ENCODE measurements at regions of chr11 and their contacts with region 1.

Region 1: GRCh38 chr11:66268283-66268951 is at the start of gene RAB1B:
- DNase-seq: peak; percentile 98 to 100
- H3K4me3 ChIP-seq: peak within 1 kb of the TSS; percentile 63 to 84
- H3K27ac ChIP-seq: peak within 1 kb of the TSS; percentile 94 to 99
- H3K4me1 ChIP-seq: peaks cover 0 to 24% of the 10 kb centered on the region in 2 donors
- H3K27me3 ChIP-seq: no peaks in the 10 kb centered on the region
- CTCF ChIP-seq: no peak
- total RNA-seq, gene RAB1B: 171 TPM

Region 2: GRCh38 chr11:65637794-65638317 is 630.6 kb before region 1 on chr11 and contains the start of gene SIPA1:
- intact Hi-C with region 1: no loop called
- DNase-seq: peak in 1 of 2 donors; percentile 84
- H3K4me3 ChIP-seq: peak within 1 kb of the TSS; percentile 53 to 84
- H3K27ac ChIP-seq: peak within 1 kb of the TSS; percentile 71 to 84
- H3K4me1 ChIP-seq: peaks cover 2 to 10% of the 10 kb centered on the region in 2 donors
- H3K27me3 ChIP-seq: no peaks in the 10 kb centered on the region
- CTCF ChIP-seq: peak in 2 of 3 experiments; percentile 6 to 34
- total RNA-seq, gene SIPA1: 145 TPM

Region 3: DNA sequence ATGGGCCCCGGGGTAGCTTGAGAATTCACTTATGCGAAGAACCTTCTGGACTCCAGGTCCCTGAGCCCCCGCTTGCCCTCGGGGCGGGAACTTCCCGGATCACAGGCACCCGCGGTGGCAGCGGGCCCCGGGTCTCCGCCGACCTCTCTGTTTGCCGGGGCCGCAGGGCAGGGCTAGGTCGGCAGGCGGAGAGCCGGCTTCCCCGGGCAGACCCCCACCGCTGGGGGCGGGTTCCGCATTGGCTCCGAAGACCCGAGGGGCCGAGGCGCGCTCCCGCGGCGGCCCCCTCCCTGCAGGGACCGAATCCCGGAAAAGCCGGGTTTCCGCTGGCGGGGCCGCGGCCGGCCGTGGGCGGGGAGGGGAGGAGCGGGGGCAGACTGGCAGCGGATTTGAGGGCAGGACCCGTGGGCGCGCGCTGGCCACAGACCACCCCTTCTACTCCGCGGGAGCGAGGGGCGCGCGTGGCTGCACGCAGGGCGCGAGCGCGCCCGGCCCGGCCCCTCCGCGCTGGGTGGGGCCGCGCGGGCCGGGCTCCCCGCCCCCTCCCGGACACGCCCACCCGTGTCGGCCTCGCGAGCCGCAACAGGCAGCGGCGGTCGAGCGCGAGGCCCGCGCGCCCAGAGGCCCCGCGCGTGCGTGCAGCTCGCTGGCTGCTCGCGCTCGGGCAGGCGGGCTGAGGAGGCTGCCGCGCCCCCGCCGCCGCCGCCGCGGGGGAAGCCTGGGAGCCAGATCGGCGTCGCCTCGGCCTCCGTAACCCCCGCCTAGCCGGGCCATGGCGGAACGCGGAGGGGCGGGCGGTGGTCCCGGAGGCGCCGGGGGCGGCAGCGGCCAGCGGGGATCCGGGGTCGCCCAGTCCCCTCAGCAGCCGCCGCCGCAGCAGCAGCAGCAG is 198.5 kb before region 1 on chr11 and contains the start of gene PACS1:
- intact Hi-C with region 1: loop called (anchors 5 kb)
- DNase-seq: peak in 1 of 2 donors; percentile 87
- H3K4me3 ChIP-seq: peak within 1 kb of the TSS; percentile 91 to 97
- H3K27ac ChIP-seq: peak within 1 kb of the TSS; percentile 97
- H3K4me1 ChIP-seq: peaks cover 4 to 22% of the 10 kb centered on the region in 2 donors
- H3K27me3 ChIP-seq: no peaks in the 10 kb centered on the region
- CTCF ChIP-seq: peak in 1 of 3 experiments; percentile 51
- total RNA-seq, gene PACS1: 138 TPM

Region 4: GRCh38 chr11:66150140-66150539 is 118.3 kb before region 1 on chr11:
- intact Hi-C with region 1: no loop called
- DNase-seq: no peak
- H3K4me3 ChIP-seq: no peak overlapping the region
- H3K27ac ChIP-seq: no peak overlapping the region
- H3K4me1 ChIP-seq: peaks cover 0 to 4% of the 10 kb centered on the region in 2 donors
- H3K27me3 ChIP-seq: no peaks in the 10 kb centered on the region
- CTCF ChIP-seq: no peak

Region 5: GRCh38 chr11:66282468-66283386 is 14.3 kb after region 1 on chr11:
- intact Hi-C with region 1: loop called (anchors 1 kb)
- DNase-seq: peak; percentile 92 to 99
- H3K4me3 ChIP-seq: no peak overlapping the region
- H3K27ac ChIP-seq: no peak overlapping the region
- H3K4me1 ChIP-seq: peaks cover 2 to 22% of the 10 kb centered on the region in 2 donors
- H3K27me3 ChIP-seq: no peaks in the 10 kb centered on the region
- CTCF ChIP-seq: peak; percentile 96 to 99 (median 98)

Region 6: DNA sequence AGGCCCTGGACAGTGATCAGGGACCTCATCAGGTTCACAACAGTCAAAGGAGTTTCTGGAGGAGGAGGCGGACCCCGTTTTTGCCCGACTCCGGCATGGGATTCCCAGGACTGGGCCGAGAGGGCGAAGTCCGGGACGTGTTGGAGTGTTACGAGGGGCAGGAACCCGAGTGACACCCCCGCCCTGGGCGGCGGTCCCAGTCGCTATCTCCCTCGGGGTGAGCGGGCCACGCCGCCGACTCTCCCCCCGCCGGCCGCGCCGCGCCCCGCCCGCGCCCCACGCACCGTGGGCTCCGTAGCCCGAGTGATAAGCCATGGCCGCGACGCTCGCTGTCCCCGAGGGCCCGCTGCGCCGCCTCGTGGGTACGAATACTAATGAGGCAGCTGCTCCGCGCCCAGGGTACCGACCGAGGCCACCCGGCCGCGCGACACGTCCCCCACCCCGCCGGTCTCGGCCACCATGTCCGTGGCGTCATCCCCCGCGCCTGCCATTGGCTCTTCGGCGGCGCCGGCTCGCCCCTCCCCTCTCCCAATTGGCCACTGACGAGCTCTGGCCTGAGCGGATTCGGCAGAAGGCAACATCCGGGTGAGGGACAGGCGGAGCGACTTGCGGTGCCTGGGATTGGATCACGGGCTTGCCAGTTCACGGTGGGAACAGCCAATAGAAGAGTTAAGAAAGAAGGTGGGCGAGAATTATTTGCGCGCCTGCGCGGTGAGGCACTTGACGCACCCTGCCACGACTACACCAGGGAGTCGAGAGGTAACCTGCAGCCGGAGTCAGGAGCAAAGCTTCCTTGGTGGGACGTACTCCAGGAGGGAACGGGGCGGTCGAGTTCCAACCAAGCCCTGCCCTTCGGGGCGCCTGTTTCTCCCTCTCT is 20.5 kb after region 1 on chr11 and contains the start of gene YIF1A:
- intact Hi-C with region 1: loop called (anchors 1 kb)
- DNase-seq: peak; percentile 98 to 99
- H3K4me3 ChIP-seq: peak within 1 kb of the TSS; percentile 72 to 74
- H3K27ac ChIP-seq: peak within 1 kb of the TSS; percentile 94
- H3K4me1 ChIP-seq: peaks cover 8 to 22% of the 10 kb centered on the region in 2 donors
- H3K27me3 ChIP-seq: peaks cover 8% of the 10 kb centered on the region
- CTCF ChIP-seq: no peak
- total RNA-seq, gene YIF1A: 161 TPM

Measured in ascending aorta (tissue), 2 donors.